HEK293T (cell line): ENCODE measurements at regions of chr16 and their contacts with region 1.

Region 1: DNA sequence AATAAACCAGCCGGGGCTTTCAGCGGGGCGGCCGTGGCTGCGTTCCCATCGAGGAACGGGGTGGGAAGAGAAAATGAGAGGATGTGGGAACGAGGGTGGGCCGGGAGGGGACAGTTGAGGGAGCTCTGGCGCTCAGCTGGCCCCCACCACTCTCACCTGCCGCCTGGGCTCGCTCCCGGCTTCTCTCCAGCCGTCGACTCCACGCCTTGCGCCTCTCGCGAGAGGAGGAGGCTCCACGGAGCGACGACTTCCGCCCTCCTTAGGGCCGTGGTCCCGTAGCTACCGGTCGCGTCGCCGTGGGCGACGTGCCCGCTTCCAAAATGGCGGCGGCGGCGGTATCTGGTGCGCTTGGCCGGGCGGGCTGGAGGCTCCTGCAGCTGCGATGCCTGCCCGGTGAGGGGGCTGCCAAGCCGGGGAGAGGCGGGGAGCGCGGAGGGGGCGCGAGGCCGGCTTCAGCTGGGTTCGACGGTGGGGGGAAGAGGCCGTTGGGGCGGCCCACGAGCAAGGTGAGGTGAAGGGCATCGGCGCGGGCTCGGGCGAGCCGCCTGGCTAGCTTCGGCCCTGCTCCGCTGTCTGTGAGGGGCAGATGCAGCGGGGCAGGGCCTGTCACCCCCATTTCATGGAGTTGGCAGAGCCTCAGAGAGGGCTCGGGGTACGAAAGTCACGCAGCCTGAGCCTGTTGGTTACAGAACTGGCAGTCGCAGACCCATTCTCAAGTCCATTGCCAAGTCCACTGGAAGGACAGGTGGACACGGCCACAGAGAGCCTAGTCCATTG is at the starts of genes CIAPIN1 and COQ9:
- DNase-seq: peak; percentile 95

Region 2: DNA sequence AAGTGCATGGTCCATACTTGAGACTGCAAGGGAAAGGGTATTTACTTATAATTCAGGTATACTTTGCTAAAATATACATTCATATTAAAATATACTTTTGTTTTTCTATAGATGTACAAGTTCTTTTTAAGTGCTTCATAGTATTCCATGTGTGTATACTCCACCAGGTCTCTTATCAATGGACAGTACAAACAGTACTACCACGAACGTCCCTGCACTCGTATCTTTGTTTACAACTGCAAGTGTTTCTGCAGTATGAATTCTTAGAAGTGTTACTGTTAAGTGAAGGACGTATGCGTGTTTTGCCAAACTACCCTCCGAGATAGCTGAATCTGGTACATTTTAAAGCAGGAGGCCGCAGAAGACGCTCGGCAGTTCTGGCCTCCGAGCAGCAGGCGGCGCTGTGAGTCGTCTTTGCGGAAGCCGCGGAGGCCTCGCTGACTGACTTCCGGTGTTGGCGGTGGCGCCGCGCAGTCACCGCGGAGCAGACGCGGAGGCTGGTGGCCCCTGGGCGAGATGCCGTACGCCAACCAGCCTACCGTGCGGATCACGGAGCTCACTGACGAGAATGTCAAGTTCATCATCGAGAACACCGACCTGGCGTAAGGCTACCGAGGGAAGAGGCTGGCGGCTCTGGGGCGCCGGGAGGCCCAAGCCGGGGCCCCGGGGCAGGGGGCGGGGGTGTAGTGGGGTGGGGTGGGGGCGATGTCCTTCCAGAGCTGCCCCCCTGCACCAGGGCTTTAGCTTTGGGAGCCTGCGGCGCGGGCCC is 15.0 kb after region 1 on chr16 and contains the start of gene POLR2C:
- CTCF ChIA-PET with region 1: interaction called, 10 read pairs
- POLR2A ChIA-PET with region 1: interaction called, 27 read pairs
- DNase-seq: peak; percentile 93